GM10248 (cell line): ENCODE measurements at regions of chr6 and their contacts with region 1.

Region 1: DNA sequence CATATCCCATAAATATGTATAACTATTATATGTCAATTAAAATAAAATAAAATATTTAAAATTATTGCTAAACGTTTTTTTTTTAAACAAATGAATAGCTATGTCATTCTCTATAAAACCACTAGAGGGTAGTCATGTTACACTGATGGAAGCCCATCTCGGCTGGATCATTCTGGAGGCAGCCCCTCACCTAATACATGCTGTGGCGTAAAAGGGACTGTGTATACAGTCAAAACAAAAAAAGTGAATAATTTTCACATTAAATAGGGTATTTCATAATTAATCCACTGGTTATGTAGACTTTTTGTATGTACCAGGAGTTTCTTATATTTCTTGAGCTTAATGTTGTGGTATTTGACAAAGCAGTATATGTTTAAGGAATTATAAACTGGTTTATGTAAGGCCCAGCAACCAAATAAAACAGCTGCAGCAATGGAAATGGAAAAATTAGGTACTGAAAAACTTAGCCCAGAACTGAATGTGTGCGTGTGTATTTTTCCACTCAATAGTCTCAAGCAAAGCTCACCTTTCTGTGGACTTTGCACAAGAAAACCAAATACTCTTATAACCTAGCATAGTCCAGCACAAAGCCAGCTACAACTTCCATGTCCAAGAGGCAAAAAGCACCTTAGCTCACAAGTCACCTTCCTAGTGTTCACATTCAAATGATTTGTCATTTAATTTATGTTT is 81.7 kb downstream of the COL9A1 start:
- DNase-seq: peak; percentile 43
- CTCF ChIP-seq: peak; percentile 52

Region 2: GRCh38 chr6:70198785-70199184 is 22.4 kb before region 1 on chr6:
- CTCF ChIA-PET with region 1: interaction called, 12 read pairs
- POLR2A ChIA-PET with region 1: no interaction called
- DNase-seq: no peak
- CTCF ChIP-seq: no peak

Region 3: GRCh38 chr6:70231311-70231710 is 10.1 kb after region 1 on chr6:
- CTCF ChIA-PET with region 1: interaction called, 75 read pairs
- POLR2A ChIA-PET with region 1: no interaction called
- DNase-seq: no peak
- CTCF ChIP-seq: no peak

Region 4: DNA sequence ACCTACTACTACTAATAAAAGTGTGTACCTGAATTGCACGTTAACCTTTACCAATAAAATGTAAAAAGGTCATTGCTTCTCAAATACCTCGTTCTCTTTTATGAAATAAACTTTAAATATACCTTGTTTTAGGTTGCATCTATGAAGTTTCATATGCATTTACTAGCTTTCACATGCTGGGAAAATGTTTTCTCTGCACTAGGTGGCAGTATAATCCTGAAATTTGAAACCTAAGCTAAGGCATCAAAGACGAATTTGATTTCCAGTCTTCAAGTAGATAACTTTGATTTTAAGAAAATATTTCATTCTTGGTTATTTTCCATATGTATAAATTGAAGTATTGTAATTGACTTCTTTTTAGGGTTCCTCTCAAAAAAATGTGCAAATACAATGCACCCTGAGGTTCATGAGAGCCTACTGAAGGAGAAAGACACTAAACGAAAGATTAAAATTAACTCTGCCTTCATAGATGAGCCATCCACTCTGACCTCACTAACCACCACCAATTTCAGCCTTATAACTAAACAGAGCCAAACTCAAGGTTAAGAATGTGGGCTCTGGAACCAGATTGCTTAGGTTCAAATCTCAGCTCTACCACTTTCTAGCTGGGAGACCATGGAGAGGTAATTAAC is 89.0 kb after region 1 on chr6:
- CTCF ChIA-PET with region 1: interaction called, 19 read pairs
- POLR2A ChIA-PET with region 1: no interaction called
- DNase-seq: no peak
- CTCF ChIP-seq: peak; percentile 64

Region 5: DNA sequence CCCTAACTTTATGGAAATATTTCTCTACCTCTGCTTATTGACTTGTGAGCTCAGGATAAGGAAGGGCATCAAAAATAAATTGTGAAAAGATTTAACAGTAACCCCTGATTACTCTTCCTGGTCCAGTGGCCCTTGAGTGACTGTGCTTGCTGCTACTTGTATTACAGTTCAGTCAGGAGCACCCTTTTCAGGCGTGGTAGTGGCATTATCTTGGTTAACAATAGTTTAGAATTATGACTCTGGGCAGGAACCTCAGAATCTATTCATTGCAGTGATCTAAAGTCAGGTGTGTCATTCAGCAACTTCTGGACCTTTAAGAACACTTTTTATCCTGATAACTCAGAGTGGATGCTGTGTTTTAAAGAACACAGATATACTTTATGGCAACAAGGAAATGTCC is 235.6 kb after region 1 on chr6:
- CTCF ChIA-PET with region 1: no interaction called
- POLR2A ChIA-PET with region 1: no interaction called
- DNase-seq: no peak
- CTCF ChIP-seq: no peak

Region 6: DNA sequence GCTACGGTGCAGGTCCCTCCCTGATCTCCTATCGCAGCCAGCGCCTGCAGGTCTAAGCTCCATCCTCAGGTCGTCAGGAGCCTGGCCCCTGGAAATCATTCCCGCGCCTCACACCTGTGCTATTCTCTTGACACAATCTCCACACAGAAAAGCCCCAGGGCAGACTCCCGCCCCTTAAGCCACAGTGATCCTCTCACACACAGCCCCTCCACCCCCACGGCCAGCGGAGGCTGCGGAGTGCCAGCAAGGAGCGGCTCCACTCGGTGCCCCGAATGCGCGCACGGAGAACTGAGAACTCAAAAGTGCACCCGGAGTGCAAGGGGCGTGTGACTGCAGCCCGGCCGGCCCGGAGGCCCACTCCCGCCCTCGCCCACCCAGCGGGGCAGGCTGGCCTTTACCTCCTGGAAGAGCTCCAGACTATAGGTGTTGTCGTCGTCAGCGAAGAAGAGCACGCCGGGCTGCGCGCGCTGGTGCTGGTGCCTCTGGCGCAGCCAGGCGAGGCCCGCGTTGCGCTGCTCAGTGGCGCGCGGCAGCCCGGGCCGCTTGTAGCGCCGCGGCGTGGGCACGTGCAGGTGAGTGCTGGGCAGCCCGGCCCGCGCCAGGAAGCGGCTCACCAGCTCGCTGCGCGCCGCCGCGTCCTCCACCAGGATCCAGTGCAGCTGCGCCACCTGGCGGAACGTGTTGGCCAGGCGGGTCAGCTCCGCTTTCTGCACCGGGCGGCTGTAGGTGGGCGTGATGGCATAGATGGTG is 734.4 kb after region 1 on chr6:
- CTCF ChIA-PET with region 1: interaction called, 37 read pairs
- POLR2A ChIA-PET with region 1: no interaction called
- DNase-seq: peak; percentile 85
- CTCF ChIP-seq: peak; percentile 97